Panc1 (cell line): ENCODE measurements at regions of chr12 and their contacts with region 1.

Region 1: DNA sequence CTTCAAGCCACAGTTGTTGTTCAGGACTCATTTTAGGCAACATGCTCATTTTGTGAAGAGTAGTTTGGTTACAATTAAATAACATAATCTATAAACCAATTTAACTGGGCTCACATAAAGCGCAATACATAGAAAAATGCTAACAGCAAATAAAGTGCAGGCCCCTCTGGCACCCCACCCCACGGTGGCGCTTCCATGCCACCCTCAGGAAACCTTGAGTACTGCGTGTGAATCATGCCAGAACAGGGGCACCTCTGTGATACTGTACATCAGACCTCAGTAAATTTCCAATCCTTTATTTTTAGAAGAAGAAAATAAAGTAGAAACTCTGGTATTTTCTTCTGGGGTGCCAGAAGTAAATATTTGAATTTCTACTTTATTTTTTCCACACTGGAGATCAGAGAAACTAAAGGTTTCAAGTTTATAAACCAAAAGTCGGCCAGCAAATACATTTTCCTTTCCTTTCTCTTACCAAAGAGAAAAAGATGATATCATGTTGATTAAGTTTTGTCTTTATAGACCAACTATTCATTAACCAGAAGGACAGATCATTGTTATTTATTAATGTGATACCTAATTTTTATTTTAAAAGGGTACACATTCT is 316.8 kb downstream of the PAWR start:
- DNase-seq: no peak
- ATAC-seq: peak; percentile 92
- H3K4me3 ChIP-seq: no peak overlapping the region
- H3K27ac ChIP-seq: no peak overlapping the region
- H3K4me1 ChIP-seq: no peaks in the 10 kb centered on the region
- H3K27me3 ChIP-seq: no peaks in the 10 kb centered on the region
- CTCF ChIP-seq: peak; percentile 84

Region 2: DNA sequence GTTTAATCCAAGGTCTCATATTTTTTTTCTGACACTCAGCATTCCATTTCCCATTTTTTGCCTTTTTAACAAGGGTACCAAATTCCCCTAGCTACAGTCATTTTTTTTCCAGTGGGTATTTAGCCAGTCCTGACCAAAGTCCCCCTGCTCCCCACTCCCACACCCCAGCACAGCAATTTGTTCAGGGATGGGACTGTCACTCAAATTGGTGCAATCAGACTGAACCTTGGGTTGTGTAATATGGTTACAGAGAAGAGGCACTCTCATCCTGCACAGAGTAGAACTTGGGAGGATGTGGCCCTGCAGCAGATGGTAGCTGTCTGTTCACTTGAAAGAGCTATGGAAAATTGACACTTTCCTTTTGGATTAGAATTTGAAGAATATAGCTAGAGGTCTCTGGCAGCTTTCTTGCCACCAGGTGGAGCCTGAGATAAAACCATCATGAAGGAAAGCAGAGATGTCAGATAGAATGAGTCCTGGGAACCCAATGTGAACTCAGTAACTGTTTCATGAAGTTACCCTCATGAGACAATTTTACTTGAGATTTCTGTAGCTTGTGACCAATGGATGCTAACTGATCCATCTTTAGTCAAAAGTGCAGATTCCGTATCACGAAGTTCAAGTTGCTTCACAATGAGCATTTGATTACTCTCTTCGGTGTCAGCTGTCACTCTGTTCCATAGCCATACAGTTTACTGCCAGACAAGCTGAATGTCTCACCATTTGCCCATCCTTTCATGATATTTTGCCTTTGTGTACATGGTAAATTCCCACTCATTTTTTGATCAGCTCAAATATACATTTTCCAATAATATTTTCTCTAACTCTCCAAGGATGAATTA is 903.4 kb before region 1 on chr12:
- CTCF ChIA-PET with region 1: interaction called, 3 read pairs
- POLR2A ChIA-PET with region 1: no interaction called
- in situ Hi-C with region 1: no loop called
- intact Hi-C with region 1: loop called (anchors 5 kb)
- DNase-seq: peak; percentile 32
- ATAC-seq: peak; percentile 84
- H3K4me3 ChIP-seq: no peak overlapping the region
- H3K27ac ChIP-seq: no peak overlapping the region
- H3K4me1 ChIP-seq: no peaks in the 10 kb centered on the region
- H3K27me3 ChIP-seq: no peaks in the 10 kb centered on the region
- CTCF ChIP-seq: peak; percentile 74

Region 3: DNA sequence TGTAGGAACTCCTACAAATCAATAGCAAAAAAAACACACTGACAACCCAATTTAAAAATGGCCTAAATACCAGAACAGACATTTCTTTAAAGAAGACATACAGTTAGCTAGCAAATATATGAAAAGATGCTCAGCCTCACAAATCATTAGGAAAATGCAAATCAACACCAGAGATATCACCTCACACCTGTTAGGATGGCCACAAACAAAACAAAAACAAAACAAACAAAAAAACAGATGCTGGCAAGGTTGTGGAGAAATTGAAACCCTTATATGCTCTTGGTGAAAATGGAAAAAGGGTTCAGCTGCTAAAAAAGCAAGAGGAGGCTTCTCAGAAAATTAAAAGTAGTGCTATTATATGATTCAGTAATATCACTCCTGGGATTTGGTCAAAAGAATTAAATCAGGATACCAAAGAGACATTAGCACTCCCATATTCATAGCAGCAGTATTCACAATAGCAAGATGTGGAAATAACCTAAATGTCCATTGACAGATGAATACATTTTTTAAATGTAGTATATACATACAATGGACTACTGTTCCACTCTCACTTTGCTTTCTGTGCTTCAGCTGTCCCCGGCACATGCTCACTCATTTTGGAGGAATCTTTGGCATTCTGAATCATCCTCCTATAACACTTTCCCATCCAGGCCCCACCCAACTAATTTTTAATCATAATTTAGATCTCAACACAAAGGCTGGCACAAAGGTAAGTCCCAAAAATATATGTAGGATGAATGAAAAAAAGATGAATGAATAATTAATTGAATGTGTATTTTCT is 410.4 kb before region 1 on chr12:
- CTCF ChIA-PET with region 1: no interaction called
- POLR2A ChIA-PET with region 1: no interaction called
- in situ Hi-C with region 1: no loop called
- intact Hi-C with region 1: no loop called
- DNase-seq: peak; percentile 15
- ATAC-seq: no peak
- H3K4me3 ChIP-seq: no peak overlapping the region
- H3K27ac ChIP-seq: no peak overlapping the region
- H3K4me1 ChIP-seq: no peaks in the 10 kb centered on the region
- H3K27me3 ChIP-seq: no peaks in the 10 kb centered on the region
- CTCF ChIP-seq: no peak

Region 4: DNA sequence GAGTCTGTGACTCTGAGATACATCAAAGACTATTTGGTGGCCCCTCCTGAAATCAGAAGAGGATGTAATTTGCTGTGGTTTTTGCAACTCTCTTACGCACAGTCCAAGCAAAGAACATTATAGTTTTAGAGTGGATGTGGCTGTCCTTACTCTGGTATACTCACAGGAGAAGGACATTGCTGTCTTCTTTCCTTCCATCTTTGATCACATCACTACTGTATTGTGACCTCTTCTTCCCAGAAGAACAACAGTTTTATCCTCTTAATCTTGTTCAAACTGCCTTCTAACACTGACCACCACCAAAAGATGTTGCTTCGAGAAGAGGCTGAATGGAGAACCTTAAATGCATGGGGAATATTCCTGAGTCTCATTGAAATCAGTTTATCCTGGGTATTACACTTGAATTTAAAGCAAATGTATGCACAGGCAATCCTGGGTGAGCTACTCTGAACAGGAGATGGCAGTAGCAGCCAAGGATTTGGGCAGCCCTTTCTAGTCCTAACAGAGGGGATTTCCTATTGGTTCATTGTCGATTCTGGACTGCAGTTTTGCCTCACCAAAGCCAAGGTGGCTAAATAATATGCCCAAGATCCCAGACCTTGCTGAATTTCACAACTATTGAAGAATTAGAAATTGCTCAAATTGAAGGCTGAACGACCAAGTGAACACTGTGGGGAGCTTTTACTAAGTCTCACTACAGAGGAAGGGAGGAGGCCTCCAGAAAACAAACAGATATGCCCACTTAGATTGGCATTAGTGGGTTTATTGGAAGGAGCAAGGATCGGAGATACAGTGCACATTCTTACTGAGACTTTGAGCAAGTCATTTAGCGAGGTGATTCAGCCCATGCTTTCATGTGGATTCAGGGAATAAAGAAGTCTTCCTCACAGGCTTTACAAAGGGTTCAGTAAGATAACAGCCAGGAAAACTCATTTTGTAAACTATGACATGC is 33.9 kb after region 1 on chr12:
- CTCF ChIA-PET with region 1: no interaction called
- POLR2A ChIA-PET with region 1: no interaction called
- in situ Hi-C with region 1: no loop called
- intact Hi-C with region 1: no loop called
- DNase-seq: peak; percentile 64
- ATAC-seq: peak; percentile 99
- H3K4me3 ChIP-seq: no peak overlapping the region
- H3K27ac ChIP-seq: no peak overlapping the region; the same call in 1 of the 2 replicates
- H3K4me1 ChIP-seq: peaks cover 6% of the 10 kb centered on the region; the same call in 1 of the 2 replicates
- H3K27me3 ChIP-seq: no peaks in the 10 kb centered on the region
- CTCF ChIP-seq: peak; percentile 85

Region 5: DNA sequence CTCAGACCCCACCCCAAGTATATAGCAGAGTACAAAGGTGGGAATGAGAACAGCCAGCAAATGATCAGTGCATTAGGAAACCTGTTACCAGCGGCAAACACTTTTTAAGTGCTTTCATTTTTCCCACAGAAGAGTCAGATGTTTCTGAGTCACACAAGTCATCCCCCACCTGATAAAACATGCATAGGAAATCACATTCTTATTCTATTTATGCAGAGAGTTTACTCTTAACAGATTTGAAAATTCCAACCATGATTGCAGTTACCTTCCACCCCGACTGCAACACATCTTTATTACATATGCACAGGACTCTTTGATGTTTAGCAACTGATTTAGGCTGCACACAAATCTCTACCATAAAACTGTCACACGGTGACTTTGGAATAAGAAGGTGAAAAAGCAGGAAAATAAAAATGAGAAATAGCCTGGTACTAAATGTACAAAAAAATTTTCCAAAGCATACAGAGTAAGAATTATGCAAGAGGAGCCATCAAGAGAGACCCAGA is 80.4 kb after region 1 on chr12:
- CTCF ChIA-PET with region 1: no interaction called
- POLR2A ChIA-PET with region 1: no interaction called
- in situ Hi-C with region 1: no loop called
- intact Hi-C with region 1: no loop called
- DNase-seq: no peak
- ATAC-seq: peak; percentile 57
- H3K4me3 ChIP-seq: peak overlapping the region in 1 of 2 experiments; percentile 27; a peak in 3 of 4 replicates
- H3K27ac ChIP-seq: peak overlapping the region; percentile 62
- H3K4me1 ChIP-seq: peaks cover 27% of the 10 kb centered on the region
- H3K27me3 ChIP-seq: no peaks in the 10 kb centered on the region
- CTCF ChIP-seq: no peak